Activated CD4-positive, alpha-beta memory T cell treated with anti-CD3 and anti-CD28 coated beads, Interleukin-2, amount 10 ng/mL, durations not matched to agents 7 days and 5 days (primary cell): ENCODE measurements at regions of chr3 and their contacts with region 1.

Region 1: DNA sequence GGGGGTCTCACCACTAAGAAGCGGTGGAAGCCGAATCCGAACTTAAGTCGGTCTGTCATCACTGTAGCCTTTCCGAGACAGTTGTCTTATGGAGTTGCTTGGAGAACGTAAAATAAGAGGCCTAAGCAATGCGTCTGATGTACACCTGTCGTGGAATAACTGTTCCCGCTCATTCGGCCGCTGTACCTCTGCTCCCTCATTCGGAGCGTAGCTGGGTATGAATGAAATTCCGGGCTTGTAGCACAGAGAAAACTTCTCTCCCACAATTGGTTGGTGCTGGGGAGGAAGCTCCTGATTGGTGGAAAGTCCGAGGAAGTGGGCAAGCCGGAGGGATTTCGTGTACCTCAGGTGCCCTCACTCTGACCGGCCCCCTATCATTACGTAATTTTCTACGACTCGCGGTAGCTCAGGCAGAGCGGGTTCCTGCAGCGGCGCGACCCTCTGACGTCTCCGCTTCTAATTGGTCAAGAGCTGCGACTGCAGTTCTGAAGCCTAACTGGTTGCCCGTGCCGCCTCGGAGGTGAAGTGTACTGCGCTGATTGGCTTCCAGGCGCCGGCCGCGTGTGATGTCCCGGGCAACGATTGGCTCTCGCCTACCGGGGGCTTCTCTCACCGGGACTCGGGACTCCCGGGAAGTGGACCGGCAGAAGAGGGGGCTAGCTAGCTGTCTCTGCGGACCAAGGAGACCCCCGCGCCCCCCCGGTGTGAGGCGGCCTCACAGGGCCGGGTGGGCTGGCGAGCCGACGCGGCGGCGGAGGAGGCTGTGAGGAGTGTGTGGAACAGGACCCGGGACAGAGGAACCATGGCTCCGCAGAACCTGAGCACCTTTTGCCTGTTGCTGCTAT is at the start of gene DNAJB11:
- DNase-seq: peak; percentile 99
- H3K4me3 Mint-ChIP-seq: peak within 1 kb of the TSS; percentile 96
- H3K27ac Mint-ChIP-seq: peak within 1 kb of the TSS; percentile 92
- H3K4me1 Mint-ChIP-seq: peaks cover 62% of the 10 kb centered on the region
- H3K27me3 Mint-ChIP-seq: no peaks in the 10 kb centered on the region
- total RNA-seq, gene DNAJB11: 50.7 to 55.7 TPM

Region 2: DNA sequence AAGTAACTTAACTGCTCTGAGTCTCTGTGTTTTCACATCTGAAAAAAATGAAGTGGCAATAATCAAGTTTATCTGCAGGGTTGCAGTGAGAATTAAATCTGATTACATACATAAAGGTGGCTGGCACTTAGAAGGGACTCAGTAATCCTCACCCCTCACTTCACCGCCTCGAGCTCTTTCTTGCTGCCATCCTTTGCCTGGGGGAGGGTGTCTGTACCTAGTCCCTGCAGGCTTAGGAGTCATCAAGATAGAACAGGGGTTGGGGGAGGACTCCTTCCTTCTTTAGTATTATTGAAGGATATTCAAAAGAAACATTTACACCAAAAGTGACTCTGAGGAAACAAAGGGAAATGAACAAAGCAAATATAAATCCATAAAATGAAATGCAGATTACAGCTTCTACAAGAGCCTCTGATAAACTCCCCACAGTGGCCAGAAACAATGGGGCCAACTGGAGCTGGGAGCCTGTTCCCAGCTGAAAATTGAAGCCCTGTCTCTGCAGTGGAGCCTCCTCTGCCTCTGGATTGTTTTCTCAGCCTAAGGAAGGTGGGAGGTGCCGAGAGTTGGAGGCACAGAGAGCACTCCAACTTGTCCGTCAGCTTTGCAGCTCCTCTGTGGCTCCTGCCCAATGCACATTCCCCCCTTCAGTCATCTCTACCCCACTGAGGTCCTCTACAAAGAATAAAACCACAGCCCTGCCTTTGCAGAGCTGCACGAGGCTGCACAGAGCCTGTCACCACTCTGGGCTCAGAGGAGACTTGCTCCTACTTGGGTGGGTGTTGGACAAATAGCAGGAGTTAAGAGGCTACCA is 68.0 kb before region 1 on chr3:
- CTCF ChIA-PET with region 1: no interaction called
- POLR2A ChIA-PET with region 1: no interaction called
- DNase-seq: no peak
- H3K4me3 Mint-ChIP-seq: peak overlapping the region; percentile 8
- H3K27ac Mint-ChIP-seq: no peak overlapping the region
- H3K4me1 Mint-ChIP-seq: peaks cover 2% of the 10 kb centered on the region
- H3K27me3 Mint-ChIP-seq: peaks cover 5% of the 10 kb centered on the region

Region 3: DNA sequence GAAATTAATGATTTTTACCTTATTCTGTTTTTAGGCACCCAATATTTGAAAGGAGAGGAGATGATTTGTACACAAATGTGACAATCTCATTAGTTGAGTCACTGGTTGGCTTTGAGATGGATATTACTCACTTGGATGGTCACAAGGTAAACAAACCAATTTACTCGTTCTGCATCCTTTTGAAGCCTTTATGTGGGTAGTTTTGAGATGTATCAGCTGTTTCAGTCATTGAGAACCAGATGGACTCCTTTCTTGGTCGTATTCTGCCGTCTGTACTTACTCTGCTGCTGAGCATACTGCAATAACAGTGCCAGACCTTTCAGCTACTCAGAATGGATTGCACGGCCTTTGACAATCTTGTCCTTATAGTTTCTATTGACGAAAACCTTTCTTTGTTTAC is 13.5 kb after region 1 on chr3:
- CTCF ChIA-PET with region 1: interaction called, 3 read pairs
- POLR2A ChIA-PET with region 1: interaction called, 27 read pairs
- DNase-seq: no peak
- H3K4me3 Mint-ChIP-seq: no peak overlapping the region
- H3K27ac Mint-ChIP-seq: no peak overlapping the region
- H3K4me1 Mint-ChIP-seq: peaks cover 11% of the 10 kb centered on the region
- H3K27me3 Mint-ChIP-seq: no peaks in the 10 kb centered on the region

Region 4: GRCh38 chr3:186821429-186822367 is 251.4 kb after region 1 on chr3:
- CTCF ChIA-PET with region 1: interaction called, 10 read pairs
- POLR2A ChIA-PET with region 1: interaction called, 8 read pairs
- DNase-seq: no peak
- H3K4me3 Mint-ChIP-seq: no peak overlapping the region
- H3K27ac Mint-ChIP-seq: no peak overlapping the region
- H3K4me1 Mint-ChIP-seq: peaks cover 22% of the 10 kb centered on the region
- H3K27me3 Mint-ChIP-seq: no peaks in the 10 kb centered on the region